Adrenal gland (tissue), 19 donors: ENCODE measurements at regions of chr11 and their contacts with region 1.

Region 1: GRCh38 chr11:66142370-66143263 is 72.5 kb downstream of the PACS1 start:
- DNase-seq: peak in 1 of 7 donors; percentile 13
- H3K4me3 ChIP-seq: no peak overlapping the region
- H3K27ac ChIP-seq: no peak overlapping the region
- H3K4me1 ChIP-seq: peaks cover 0 to 10% of the 10 kb centered on the region in 2 donors
- H3K27me3 ChIP-seq: no peaks in the 10 kb centered on the region
- CTCF ChIP-seq: no peak
- POLR2A ChIP-seq: no peak

Region 2: GRCh38 chr11:66192181-66192863 is 49.7 kb after region 1 on chr11:
- intact Hi-C with region 1: loop called in 1 of 2 experiments (anchors 10 kb)
- DNase-seq: no peak
- H3K4me3 ChIP-seq: no peak overlapping the region
- H3K27ac ChIP-seq: no peak overlapping the region
- H3K4me1 ChIP-seq: no peaks in the 10 kb centered on the region
- H3K27me3 ChIP-seq: no peaks in the 10 kb centered on the region
- CTCF ChIP-seq: no peak
- POLR2A ChIP-seq: no peak